ENCODE measurements at regions of chr4 and their contacts with region 1.

Region 1: DNA sequence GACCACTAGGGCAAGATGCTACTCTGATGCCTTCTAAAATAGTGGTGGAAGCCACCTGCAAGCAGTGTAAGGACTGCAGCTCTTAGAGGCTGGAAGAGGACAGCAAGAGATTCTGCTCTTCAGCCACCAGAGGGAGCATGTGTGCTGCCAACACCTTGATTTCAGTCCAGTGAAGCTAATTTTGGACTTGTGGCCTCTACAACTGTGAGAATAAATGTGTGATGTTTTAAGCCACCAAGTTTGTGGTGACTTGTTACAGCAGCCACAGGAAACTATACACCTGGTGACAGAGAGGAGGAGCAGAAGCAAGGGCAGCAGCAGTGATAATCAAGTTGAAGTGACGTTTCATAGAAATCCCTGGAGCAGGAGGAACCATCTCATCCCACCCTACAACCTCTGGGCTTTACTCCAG is 55.9 kb downstream of the FGFBP1 start:
- DNase-seq: peak; percentile 65
- H3K4me3 ChIP-seq: no peak overlapping the region
- H3K27ac ChIP-seq: no peak overlapping the region
- H3K27me3 ChIP-seq: peaks cover 24% of the 10 kb centered on the region
- CTCF ChIP-seq: peak; percentile 97

Region 2: GRCh38 chr4:15805583-15806517 is 76.8 kb before region 1 on chr4:
- CTCF ChIA-PET with region 1: interaction called, 59 read pairs
- POLR2A ChIA-PET with region 1: no interaction called
- DNase-seq: peak; percentile 21
- H3K4me3 ChIP-seq: no peak overlapping the region
- H3K27ac ChIP-seq: no peak overlapping the region
- H3K27me3 ChIP-seq: peaks cover 12% of the 10 kb centered on the region
- CTCF ChIP-seq: peak; percentile 79

Region 3: GRCh38 chr4:15893962-15894361 is 11.3 kb after region 1 on chr4:
- CTCF ChIA-PET with region 1: interaction called, 19 read pairs
- POLR2A ChIA-PET with region 1: no interaction called
- DNase-seq: peak; percentile 86
- H3K4me3 ChIP-seq: no peak overlapping the region
- H3K27ac ChIP-seq: no peak overlapping the region
- H3K27me3 ChIP-seq: peaks cover 12% of the 10 kb centered on the region
- CTCF ChIP-seq: no peak

Region 4: DNA sequence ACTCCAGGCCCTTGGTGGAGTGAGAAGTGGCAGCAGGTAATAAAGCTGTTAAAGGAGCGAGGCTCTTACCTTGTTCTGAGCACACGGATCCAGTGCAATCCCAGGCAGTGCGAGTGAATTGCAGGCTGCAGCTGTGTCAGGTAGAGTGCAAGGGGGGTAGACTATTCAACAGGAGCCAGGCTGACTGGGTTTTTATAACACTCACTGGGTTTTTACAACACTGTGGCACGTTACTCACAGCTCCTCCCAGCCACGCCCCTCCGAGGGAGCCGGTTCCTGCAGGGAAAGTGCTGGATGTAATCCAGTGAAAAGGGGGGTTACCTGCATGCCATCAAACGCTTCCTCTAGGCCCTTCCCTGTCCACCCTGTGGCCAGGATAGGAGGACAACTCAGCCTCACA is 55.5 kb after region 1 on chr4:
- CTCF ChIA-PET with region 1: interaction called, 14 read pairs
- POLR2A ChIA-PET with region 1: no interaction called
- DNase-seq: no peak
- H3K4me3 ChIP-seq: no peak overlapping the region
- H3K27ac ChIP-seq: no peak overlapping the region
- H3K27me3 ChIP-seq: peaks cover 41% of the 10 kb centered on the region
- CTCF ChIP-seq: no peak

Region 5: GRCh38 chr4:15963001-15963451 is 80.3 kb after region 1 on chr4 and contains the start of gene FGFBP2:
- CTCF ChIA-PET with region 1: interaction called, 27 read pairs
- POLR2A ChIA-PET with region 1: no interaction called
- DNase-seq: no peak
- H3K4me3 ChIP-seq: no peak within 1 kb of the TSS
- H3K27ac ChIP-seq: no peak within 1 kb of the TSS
- H3K27me3 ChIP-seq: peaks cover 15% of the 10 kb centered on the region
- CTCF ChIP-seq: peak; percentile 57
- polyA plus RNA-seq, gene FGFBP2: not detected in 2 replicates